ENCODE measurements at regions of chr13 and their contacts with region 1.

Region 1: DNA sequence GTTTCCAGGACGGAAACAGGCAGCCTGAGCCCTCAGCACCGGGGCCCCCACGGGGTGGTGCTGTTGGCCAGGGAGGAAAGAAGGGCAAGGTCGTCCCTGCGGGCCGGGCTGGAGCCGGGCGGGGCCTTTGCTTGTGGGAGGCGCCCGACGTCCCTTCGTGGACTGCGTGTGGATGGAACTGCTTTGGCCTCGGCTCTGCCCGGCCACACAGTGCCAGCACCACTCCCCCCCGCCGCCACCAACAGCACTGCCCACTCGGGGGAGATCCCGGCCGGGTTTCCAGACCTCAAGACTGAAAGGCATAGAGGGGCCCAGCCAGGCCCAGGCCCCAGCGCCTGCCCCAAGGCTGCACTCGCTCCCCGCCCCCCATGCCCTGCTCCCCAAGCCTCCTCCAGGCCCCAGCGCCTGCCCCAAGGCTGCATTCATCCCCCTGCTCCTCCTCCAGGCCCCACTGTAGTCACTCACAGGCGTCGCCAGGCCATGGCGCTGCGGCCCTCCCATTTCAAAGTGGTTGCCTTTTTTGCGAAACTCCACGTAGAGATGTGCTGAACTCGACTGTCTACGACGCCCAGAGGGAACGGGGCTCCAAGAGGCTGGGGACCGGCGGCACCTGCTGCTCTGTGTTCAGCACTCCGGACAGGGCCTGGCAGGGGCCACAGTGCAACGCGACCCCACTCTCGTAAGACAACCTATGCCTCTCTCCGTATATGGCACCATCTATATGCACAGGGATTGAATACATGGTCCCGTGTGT is 22.5 kb downstream of the C13orf46 start:
- DNase-seq: peak; percentile 85
- H3K4me3 ChIP-seq: no peak overlapping the region
- H3K27ac ChIP-seq: no peak overlapping the region
- H3K4me1 ChIP-seq: no peaks in the 10 kb centered on the region
- H3K27me3 ChIP-seq: no peaks in the 10 kb centered on the region
- CTCF ChIP-seq: peak; percentile 65 to 99 (median 95)
- POLR2A ChIP-seq: no peak

Region 2: DNA sequence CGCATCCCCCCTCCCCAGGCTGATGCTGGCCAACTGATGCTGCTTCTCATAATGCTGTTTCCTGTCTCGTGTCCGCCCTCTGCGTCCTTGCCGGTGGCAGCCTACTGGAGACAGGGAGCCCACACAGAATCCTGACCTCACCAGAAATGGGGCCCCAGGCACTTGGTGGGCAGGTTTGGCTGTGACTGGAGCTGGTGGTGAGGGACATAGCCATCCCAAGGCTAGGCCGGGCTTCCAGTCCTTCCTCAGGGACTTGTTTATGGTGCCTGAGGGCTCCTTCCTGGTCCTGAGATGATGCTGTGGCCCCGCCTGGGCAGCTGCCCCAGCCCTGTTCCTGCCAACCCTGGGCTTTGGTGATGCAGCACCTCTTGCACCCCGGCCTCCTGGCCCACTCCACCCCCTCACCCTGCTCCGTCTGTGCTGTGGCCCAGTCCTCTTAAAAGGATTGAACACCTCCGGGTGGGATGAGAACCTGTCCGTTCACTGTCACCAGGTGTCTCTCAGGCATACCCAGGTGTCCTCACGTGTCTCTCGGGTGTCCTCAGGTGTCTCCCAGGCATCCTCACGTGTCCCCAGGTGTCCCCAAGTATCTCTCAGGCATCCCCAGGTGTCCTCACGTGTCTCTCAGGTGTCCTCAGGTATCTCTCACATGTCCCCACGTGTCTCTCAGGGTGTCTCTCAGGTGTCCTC is 327.5 kb before region 1 on chr13:
- intact Hi-C with region 1: loop called (anchors 5 kb)
- DNase-seq: no peak
- H3K4me3 ChIP-seq: no peak overlapping the region
- H3K27ac ChIP-seq: no peak overlapping the region
- H3K4me1 ChIP-seq: no peaks in the 10 kb centered on the region
- H3K27me3 ChIP-seq: no peaks in the 10 kb centered on the region
- CTCF ChIP-seq: no peak
- POLR2A ChIP-seq: no peak

Region 3: GRCh38 chr13:113863436-113864272 is 87.8 kb before region 1 on chr13 and contains the start of gene GAS6:
- intact Hi-C with region 1: loop called (anchors 5 kb)
- DNase-seq: peak; percentile 55
- H3K4me3 ChIP-seq: peak within 1 kb of the TSS; percentile 57 to 59
- H3K27ac ChIP-seq: peak within 1 kb of the TSS; percentile 80 to 81
- H3K4me1 ChIP-seq: no peaks in the 10 kb centered on the region
- H3K27me3 ChIP-seq: no peaks in the 10 kb centered on the region
- CTCF ChIP-seq: peak in 1 of 4 experiments; percentile 28
- POLR2A ChIP-seq: no peak
- total RNA-seq, gene GAS6: 116 to 432 TPM

Region 4: GRCh38 chr13:113916330-113916815 is 35.0 kb before region 1 on chr13:
- intact Hi-C with region 1: no loop called
- DNase-seq: no peak
- H3K4me3 ChIP-seq: no peak overlapping the region
- H3K27ac ChIP-seq: no peak overlapping the region
- H3K4me1 ChIP-seq: no peaks in the 10 kb centered on the region
- H3K27me3 ChIP-seq: no peaks in the 10 kb centered on the region
- CTCF ChIP-seq: no peak
- POLR2A ChIP-seq: no peak

Region 5: GRCh38 chr13:114203536-114203935 is 252.1 kb after region 1 on chr13:
- intact Hi-C with region 1: no loop called
- DNase-seq: no peak
- H3K4me3 ChIP-seq: no peak overlapping the region
- H3K27ac ChIP-seq: no peak overlapping the region
- H3K4me1 ChIP-seq: no peaks in the 10 kb centered on the region
- H3K27me3 ChIP-seq: peaks cover 2% of the 10 kb centered on the region
- CTCF ChIP-seq: no peak
- POLR2A ChIP-seq: no peak

Region 6: DNA sequence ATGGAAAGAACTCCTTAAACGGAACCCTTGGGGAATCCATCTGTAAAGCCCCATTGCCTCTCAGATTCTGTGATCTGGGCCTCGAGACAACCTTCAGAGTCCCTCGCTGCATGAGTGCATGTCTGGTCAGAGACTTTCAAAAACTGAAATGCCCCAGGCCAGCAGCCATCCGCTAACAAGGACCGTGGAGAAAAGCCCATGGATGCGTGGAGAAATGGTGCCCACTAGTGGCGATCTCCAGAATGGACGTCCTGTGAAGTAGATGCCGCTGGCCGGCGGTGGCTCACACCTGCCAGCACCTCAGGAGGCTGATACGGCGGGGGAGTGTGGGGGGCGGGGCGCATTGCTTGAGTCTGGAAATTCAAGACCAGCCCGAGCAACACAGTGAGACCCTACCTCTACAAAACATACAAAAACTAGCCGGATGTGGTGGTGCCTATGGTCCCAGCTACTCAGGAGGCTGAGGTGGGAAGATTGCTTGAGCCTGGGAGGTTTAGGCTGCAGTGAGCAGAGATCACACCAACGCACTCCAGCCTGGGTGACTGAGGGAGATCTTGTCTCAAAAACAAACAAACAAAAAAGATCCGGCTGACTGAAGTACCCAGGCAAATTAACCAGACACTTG is 275.4 kb after region 1 on chr13:
- intact Hi-C with region 1: loop called (anchors 1 kb)
- DNase-seq: peak; percentile 81
- H3K4me3 ChIP-seq: no peak overlapping the region
- H3K27ac ChIP-seq: no peak overlapping the region
- H3K4me1 ChIP-seq: peaks cover 5% of the 10 kb centered on the region
- H3K27me3 ChIP-seq: no peaks in the 10 kb centered on the region
- CTCF ChIP-seq: peak; percentile 90 to 98 (median 94)
- POLR2A ChIP-seq: no peak